H1 (cell line): ENCODE measurements at regions of chr9 and their contacts with region 1.

Region 1: GRCh38 chr9:137423004-137423874 is at the starts of genes EXD3 and NOXA1:
- DNase-seq: peak; percentile 68 to 99
- H3K4me3 ChIP-seq: peak within 1 kb of the TSS; percentile 70 to 84 (median 80)
- H3K27ac ChIP-seq: no peak within 1 kb of the TSS
- H3K4me1 ChIP-seq: peaks cover 0 to 2% (median 0%) of the 10 kb centered on the region in 4 experiments; a peak in 1 of 7 replicates
- H3K27me3 ChIP-seq: peaks cover 0 to 13% (median 2%) of the 10 kb centered on the region in 4 experiments; a peak in 4 of 7 replicates
- CTCF ChIP-seq: peak in 2 of 3 experiments; percentile 64 to 70; a peak in 3 of 4 replicates
- EP300 ChIP-seq: peak in 1 of 2 experiments; percentile 65; a peak in 1 of 3 replicates
- POLR2A ChIP-seq: no peak
- RAD21 ChIP-seq: peak; percentile 27 to 61; a peak in 3 of 4 replicates
- total RNA-seq, gene EXD3: 7.0 and 7.2 TPM in 2 replicates
- total RNA-seq, gene NOXA1: 0.34 and 0.55 TPM in 2 replicates

Region 2: GRCh38 chr9:137411671-137412380 is 11.4 kb before region 1 on chr9:
- CTCF ChIA-PET with region 1: interaction called, 8 read pairs
- POLR2A ChIA-PET with region 1: interaction called, 10 read pairs
- DNase-seq: no peak
- H3K4me3 ChIP-seq: no peak overlapping the region
- H3K27ac ChIP-seq: no peak overlapping the region
- H3K4me1 ChIP-seq: peaks cover 0 to 5% (median 0%) of the 10 kb centered on the region in 4 experiments; a peak in 5 of 7 replicates
- H3K27me3 ChIP-seq: no peaks in the 10 kb centered on the region
- CTCF ChIP-seq: no peak
- EP300 ChIP-seq: no peak
- POLR2A ChIP-seq: no peak
- RAD21 ChIP-seq: no peak